ENCODE measurements at regions of chr17 and their contacts with region 1.

Region 1: GRCh38 chr17:79810130-79811010 is 13.5 kb upstream of the CBX8 start:
- DNase-seq: peak; percentile 90 to 92
- ATAC-seq: peak; percentile 55 to 80
- H3K4me3 ChIP-seq: peak overlapping the region; percentile 51
- H3K27ac ChIP-seq: peak overlapping the region; percentile 95 to 99
- H3K4me1 ChIP-seq: peaks cover 40% of the 10 kb centered on the region
- CTCF ChIP-seq: no peak
- EP300 ChIP-seq: no peak
- POLR2A ChIP-seq: peak; percentile 33; the same call in 1 of the 2 replicates
- RAD21 ChIP-seq: no peak

Region 2: DNA sequence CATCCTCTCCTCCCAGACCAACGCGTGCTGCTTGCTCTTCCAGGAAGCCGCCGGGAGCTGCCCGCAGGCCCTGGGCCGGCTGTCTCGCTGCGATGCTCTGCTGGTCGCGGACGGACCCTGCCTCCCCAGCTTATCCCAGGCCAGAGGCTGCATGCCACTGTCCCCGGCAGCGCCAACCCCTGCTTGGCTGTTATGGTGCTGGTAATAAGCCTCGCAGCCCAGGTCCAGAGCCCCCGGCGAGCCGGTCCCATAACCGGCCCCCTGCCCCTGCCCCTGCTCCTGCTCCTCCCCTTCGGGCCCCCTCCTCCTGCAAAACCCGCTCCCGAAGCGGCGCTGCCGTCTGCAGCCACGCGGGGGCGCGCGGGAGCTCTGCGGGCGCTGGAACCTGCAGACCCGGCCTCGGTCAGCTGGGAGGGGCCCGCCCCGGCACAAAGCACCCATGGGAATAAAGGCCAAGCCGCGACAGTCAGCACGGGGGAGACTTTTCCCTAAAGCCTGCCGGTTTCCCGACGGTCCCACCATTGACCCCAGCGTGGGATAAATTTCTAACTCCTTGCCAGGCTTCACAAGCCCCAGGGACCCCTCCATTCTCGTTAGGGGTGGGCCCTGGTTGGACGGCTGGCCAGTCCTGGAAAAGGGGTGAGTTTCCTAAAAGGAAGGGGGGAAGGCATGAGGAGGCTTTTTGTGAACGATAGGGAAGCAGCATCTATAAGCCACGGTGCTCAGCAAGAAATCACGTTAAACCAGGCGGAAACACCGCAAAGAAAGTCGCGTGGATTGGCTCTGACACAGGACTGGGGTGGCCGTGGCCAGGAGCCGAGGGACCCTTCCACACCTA is 68.4 kb before region 1 on chr17:
- CTCF ChIA-PET with region 1: interaction called, 125 read pairs
- POLR2A ChIA-PET with region 1: no interaction called
- DNase-seq: peak; percentile 69 to 93
- ATAC-seq: peak; percentile 68 to 85
- H3K4me3 ChIP-seq: peak overlapping the region; percentile 36; the same call in 2 of the 3 replicates
- H3K27ac ChIP-seq: peak overlapping the region; percentile 51 to 74; a peak in 5 of 6 replicates
- H3K4me1 ChIP-seq: peaks cover 18% of the 10 kb centered on the region; the same call in 2 of the 3 replicates
- CTCF ChIP-seq: peak; percentile 97
- EP300 ChIP-seq: no peak
- POLR2A ChIP-seq: no peak
- RAD21 ChIP-seq: peak; percentile 72 to 85

Region 3: GRCh38 chr17:79796763-79797491 is 13.4 kb before region 1 on chr17 and contains the start of gene CBX8:
- CTCF ChIA-PET with region 1: interaction called, 1,281 read pairs
- POLR2A ChIA-PET with region 1: interaction called, 58 read pairs
- DNase-seq: peak; percentile 98 to 100
- ATAC-seq: peak; percentile 65 to 75
- H3K4me3 ChIP-seq: peak within 1 kb of the TSS; percentile 73
- H3K27ac ChIP-seq: peak within 1 kb of the TSS; percentile 97 to 98
- H3K4me1 ChIP-seq: peaks cover 35% of the 10 kb centered on the region
- CTCF ChIP-seq: no peak
- EP300 ChIP-seq: peak in 1 of 2 experiments; percentile 28; a peak in 1 of 5 replicates
- POLR2A ChIP-seq: peak; percentile 74
- RAD21 ChIP-seq: no peak
- polyA plus RNA-seq, gene CBX8: 1.5 and 2.8 TPM in 2 replicates

Region 4: GRCh38 chr17:79915850-79916430 is 105.6 kb after region 1 on chr17:
- CTCF ChIA-PET with region 1: interaction called, 51 read pairs
- POLR2A ChIA-PET with region 1: interaction called, 4 read pairs
- DNase-seq: peak; percentile 77 to 82
- ATAC-seq: peak; percentile 48 to 52; a peak in 5 of 6 replicates
- H3K4me3 ChIP-seq: no peak overlapping the region
- H3K27ac ChIP-seq: peak overlapping the region; percentile 45 to 75; a peak in 5 of 6 replicates
- H3K4me1 ChIP-seq: peaks cover 35% of the 10 kb centered on the region
- CTCF ChIP-seq: peak; percentile 56
- EP300 ChIP-seq: no peak
- POLR2A ChIP-seq: no peak
- RAD21 ChIP-seq: peak; percentile 81 to 86

Region 5: GRCh38 chr17:79991140-79991923 is 181.0 kb after region 1 on chr17:
- CTCF ChIA-PET with region 1: interaction called, 54 read pairs
- POLR2A ChIA-PET with region 1: interaction called, 22 read pairs
- DNase-seq: peak; percentile 88 to 97
- ATAC-seq: peak; percentile 69 to 90
- H3K4me3 ChIP-seq: peak overlapping the region; percentile 51
- H3K27ac ChIP-seq: peak overlapping the region; percentile 89 to 95
- H3K4me1 ChIP-seq: peaks cover 83% of the 10 kb centered on the region
- CTCF ChIP-seq: peak; percentile 88
- EP300 ChIP-seq: no peak; a peak in 1 of 5 replicates
- POLR2A ChIP-seq: no peak
- RAD21 ChIP-seq: peak; percentile 86 to 99